OCI-LY7 (cell line): ENCODE measurements at regions of chr9 and their contacts with region 1.

Region 1: DNA sequence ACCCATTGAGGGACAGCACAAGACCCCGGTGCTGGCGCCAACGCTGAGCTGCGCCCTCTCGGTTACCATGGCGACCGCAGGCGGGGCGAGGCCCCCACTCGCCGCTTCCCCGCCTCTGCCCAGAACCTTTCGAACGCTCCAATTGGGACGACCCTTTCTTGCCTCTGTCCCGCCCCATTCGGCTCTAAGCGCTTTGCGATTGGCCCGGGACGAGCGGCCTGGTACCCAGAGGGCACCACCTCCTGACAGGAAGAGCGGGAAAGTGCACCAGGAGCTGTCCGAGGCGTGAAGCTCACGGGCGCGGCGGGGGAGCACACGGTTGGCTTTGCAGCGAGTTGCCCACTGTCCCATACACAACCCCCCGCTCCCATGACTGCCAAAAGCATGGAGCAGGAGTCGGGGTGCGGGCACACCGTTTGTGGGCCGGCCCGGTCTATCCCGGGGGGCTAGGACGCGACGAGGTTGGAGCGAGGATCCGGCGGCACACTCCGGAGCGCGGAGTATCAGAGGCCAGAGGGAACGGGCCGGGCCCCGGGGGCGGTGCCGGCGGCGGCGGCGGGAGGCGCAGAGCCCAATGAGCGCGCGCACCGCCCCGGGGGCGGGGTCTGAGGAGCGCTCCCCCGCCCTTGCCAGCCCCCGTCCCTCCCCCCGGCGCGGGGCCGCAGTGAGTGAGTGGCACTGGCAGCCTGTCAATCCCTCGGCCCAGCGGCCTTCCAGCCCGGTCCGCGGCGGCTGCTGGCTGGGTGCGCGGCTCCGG is 978 bp upstream of the PBX3 start:
- DNase-seq: peak; percentile 98
- H3K4me3 ChIP-seq: peak overlapping the region; percentile 67
- H3K27ac ChIP-seq: peak overlapping the region; percentile 81
- H3K4me1 ChIP-seq: peaks cover 26% of the 10 kb centered on the region
- CTCF ChIP-seq: no peak

Region 2: GRCh38 chr9:125407974-125408900 is 338.0 kb before region 1 on chr9:
- CTCF ChIA-PET with region 1: no interaction called
- POLR2A ChIA-PET with region 1: no interaction called
- intact Hi-C with region 1: loop called (anchors 5 kb)
- DNase-seq: peak; percentile 84
- H3K4me3 ChIP-seq: peak overlapping the region; percentile 60
- H3K27ac ChIP-seq: no peak overlapping the region
- H3K4me1 ChIP-seq: peaks cover 21% of the 10 kb centered on the region
- CTCF ChIP-seq: peak; percentile 83

Region 3: DNA sequence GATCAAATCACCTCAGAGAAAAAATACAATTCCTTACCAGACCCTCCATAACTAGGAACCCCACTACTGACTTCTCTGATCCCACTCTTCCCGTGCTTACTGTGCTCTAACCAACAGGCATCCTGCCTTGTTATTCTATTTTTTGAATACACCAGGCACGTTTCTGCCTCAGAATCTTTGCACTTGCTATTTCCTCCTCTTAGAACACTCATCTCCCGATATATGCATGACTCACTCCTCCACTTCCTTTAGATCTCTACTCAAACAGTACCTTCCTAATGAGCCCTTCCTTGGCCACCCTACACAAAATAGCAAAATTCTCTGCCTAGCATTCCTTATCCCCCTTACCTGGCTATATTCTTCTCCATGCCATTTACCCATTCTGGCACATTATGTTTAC is 83.1 kb before region 1 on chr9:
- CTCF ChIA-PET with region 1: no interaction called
- POLR2A ChIA-PET with region 1: no interaction called
- intact Hi-C with region 1: no loop called
- DNase-seq: no peak
- H3K4me3 ChIP-seq: no peak overlapping the region
- H3K27ac ChIP-seq: no peak overlapping the region
- H3K4me1 ChIP-seq: no peaks in the 10 kb centered on the region
- CTCF ChIP-seq: no peak

Region 4: DNA sequence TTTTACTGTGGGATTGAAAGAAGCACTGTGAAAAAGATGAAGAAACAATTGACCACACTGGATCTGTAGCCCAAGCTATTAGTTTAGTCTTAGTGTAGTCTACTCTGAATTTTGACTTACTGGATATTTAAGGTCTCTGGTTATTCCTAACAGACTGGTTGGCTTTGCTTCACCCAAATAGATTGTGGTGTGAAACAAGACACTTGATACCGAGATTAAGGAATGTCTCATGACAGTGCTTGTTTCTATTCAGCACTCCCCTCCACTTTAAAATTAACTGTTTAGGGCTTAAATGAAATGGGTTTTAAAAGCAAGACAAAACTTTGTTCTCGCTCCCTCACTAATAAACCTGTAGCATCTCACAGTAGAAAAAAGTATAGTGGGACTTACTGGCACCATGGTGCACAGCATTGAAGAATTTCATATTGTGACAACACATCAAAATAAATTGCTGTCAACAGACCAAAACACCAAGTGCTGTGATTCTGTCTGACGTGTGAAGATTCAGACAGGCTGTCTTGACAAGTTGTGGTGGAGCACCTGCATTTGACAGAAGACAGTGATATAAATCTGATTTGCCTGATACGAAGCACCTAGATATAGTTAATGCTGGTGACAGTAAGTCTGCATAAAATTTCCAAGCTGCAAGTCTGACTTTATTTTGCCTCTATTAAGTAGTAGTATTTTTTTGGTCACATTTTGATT is 74.1 kb after region 1 on chr9:
- CTCF ChIA-PET with region 1: no interaction called
- POLR2A ChIA-PET with region 1: no interaction called
- intact Hi-C with region 1: loop called (anchors 2 kb)
- DNase-seq: peak; percentile 30
- H3K4me3 ChIP-seq: peak overlapping the region; percentile 37
- H3K27ac ChIP-seq: no peak overlapping the region
- H3K4me1 ChIP-seq: peaks cover 48% of the 10 kb centered on the region
- CTCF ChIP-seq: no peak